ENCODE measurements at regions of chr2 and their contacts with region 1.

Region 1: GRCh38 chr2:216687646-216688045 is 7.7 kb downstream of the IGFBP5 start:
- DNase-seq: no peak
- H3K4me3 ChIP-seq: no peak overlapping the region
- H3K27ac ChIP-seq: no peak overlapping the region
- H3K4me1 ChIP-seq: peaks cover 0 to 29% of the 10 kb centered on the region in 2 donors
- H3K27me3 ChIP-seq: no peaks in the 10 kb centered on the region
- CTCF ChIP-seq: peak in 2 of 6 experiments; percentile 15 to 23
- POLR2A ChIP-seq: no peak

Region 2: GRCh38 chr2:216404010-216404618 is 283.5 kb before region 1 on chr2:
- intact Hi-C with region 1: no loop called
- DNase-seq: peak in 6 of 7 donors; percentile 35 to 77 (median 52)
- H3K4me3 ChIP-seq: no peak overlapping the region
- H3K27ac ChIP-seq: no peak overlapping the region
- H3K4me1 ChIP-seq: no peaks in the 10 kb centered on the region
- H3K27me3 ChIP-seq: no peaks in the 10 kb centered on the region
- CTCF ChIP-seq: peak; percentile 60 to 87 (median 84)
- POLR2A ChIP-seq: no peak

Region 3: GRCh38 chr2:217510771-217511291 is 823.2 kb after region 1 on chr2:
- intact Hi-C with region 1: loop called (anchors 5 to 10 kb)
- DNase-seq: peak; percentile 66 to 92 (median 76)
- H3K4me3 ChIP-seq: no peak overlapping the region
- H3K27ac ChIP-seq: peak overlapping the region in 2 of 5 donors; percentile 2 to 48
- H3K4me1 ChIP-seq: peaks cover 10 to 40% of the 10 kb centered on the region in 2 donors
- H3K27me3 ChIP-seq: no peaks in the 10 kb centered on the region
- CTCF ChIP-seq: peak; percentile 49 to 96 (median 88)
- POLR2A ChIP-seq: no peak

Measured in adrenal gland (tissue), 19 donors.